GM13976 (cell line): ENCODE measurements at regions of chr13 and their contacts with region 1.

Region 1: GRCh38 chr13:41075034-41075433 is 13.7 kb downstream of the WBP4 start:
- DNase-seq: peak; percentile 41
- CTCF ChIP-seq: peak; percentile 1

Region 2: DNA sequence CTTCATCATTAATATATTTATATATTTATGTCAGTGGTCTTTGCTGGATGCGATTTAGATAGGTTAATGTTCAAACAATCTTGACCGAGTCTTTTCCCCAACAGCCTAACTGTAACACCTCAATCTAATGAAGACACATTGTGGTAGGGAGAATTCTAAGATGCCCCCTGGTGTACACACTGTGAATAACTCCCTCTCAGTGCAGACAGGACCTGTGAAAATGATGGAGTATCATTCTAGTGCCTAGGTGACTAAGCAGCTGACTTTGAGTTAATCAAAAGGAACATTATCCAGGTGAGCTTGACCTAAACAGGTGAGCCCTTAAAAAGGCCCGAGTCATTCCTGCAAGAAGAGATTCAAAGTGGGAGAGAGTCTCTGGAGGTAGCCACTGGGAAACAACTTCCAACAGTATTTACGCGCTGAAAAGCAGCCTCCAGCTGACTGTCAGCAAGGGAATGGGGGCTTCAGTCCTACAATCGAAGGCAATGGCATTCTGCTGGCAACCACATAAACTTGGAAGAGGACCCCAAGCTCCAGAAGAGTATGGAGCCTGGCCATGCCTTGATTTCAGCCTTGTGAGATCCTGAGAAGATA is 147.3 kb after region 1 on chr13:
- in situ Hi-C with region 1: loop called (anchors 10 kb)
- DNase-seq: peak; percentile 68
- CTCF ChIP-seq: peak; percentile 68

Region 3: GRCh38 chr13:41596190-41596589 is 521.2 kb after region 1 on chr13:
- in situ Hi-C with region 1: no loop called
- DNase-seq: no peak
- CTCF ChIP-seq: no peak

Region 4: GRCh38 chr13:41649659-41650058 is 574.6 kb after region 1 on chr13:
- in situ Hi-C with region 1: loop called (anchors 25 kb)
- DNase-seq: no peak
- CTCF ChIP-seq: no peak